Activated CD4-positive, alpha-beta T cell treated with anti-CD3 and anti-CD28 coated beads, Interleukin-2, amount 10 ng/mL, durations not matched to agents 24 days and 14 days (primary cell): ENCODE measurements at regions of chr2 and their contacts with region 1.

Region 1: DNA sequence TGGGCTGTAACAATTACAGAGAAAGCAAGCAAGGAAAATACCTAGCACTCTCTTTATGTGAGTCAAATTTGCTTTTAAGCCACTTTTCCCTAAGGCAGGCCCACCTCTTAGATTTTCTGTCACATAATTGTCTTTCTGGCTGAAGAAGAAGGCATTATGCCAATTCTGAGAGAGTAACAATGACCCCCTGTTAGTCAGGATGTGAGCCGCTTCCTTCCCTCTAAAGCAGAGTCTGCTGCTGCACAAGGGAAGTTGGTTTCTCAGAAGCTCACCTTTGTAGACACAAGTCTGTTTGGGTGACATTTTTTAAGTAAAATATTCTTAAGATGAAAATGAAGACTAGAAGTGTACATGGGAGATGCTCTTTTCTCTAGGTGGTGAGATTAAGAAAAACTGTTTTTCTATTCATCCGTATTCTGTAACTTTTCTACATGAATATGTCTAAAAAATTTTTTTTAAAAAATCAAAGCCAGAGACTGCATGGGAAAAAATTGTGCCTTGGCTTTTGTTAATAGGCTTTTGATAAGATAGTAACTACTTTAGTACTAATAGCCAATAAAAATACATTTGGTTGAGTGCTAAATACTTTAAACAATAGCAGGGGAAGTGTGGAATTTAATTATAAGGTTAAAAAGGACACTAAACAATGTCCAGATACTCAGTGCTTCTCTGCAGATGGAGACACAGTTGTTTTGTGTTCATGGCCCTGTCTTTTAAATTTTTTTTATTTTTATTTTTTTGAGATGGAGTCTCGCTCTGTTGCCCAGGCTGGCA is 33.4 kb upstream of the VPS54 start:
- DNase-seq: peak; percentile 70
- H3K4me3 Mint-ChIP-seq: no peak overlapping the region
- H3K27ac Mint-ChIP-seq: no peak overlapping the region
- H3K4me1 Mint-ChIP-seq: peaks cover 36% of the 10 kb centered on the region
- H3K27me3 Mint-ChIP-seq: no peaks in the 10 kb centered on the region

Region 2: DNA sequence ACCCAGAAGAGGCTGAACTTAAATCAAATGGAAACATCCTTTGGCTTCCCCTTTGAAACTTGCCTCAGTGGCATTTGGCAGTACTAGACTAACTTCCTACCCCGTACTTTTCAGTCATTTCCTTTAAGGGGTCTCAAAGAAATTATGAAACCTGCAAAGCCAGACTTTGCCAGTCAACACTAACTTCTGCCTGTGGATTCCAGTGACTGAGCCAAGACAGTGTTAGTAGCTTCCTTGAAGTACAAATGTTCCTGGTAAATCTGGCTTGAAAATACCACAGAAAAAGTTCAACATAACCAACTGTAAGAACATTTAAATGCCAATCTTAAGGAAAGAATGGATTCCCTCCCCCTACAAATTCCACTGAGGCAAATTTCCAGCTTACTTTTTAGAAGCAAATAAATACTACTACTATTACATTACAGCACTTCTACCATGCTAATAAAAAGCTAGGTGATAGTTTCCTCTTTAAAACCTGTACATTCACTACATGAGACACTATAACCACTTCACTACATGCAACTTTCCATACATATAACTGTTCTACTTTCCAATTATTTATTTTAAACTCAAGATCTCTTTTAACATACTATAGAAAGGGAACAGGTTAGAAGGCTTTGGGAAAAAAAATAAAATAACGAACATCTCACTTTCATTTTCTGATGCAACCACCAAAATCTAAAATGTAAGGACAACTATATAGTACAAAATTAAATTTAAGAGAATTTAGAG is 89.2 kb after region 1 on chr2:
- intact Hi-C with region 1: no loop called
- DNase-seq: peak; percentile 67
- H3K4me3 Mint-ChIP-seq: peak overlapping the region; percentile 99
- H3K27ac Mint-ChIP-seq: peak overlapping the region; percentile 85
- H3K4me1 Mint-ChIP-seq: peaks cover 39% of the 10 kb centered on the region
- H3K27me3 Mint-ChIP-seq: no peaks in the 10 kb centered on the region

Region 3: GRCh38 chr2:64488050-64488974 is 435.7 kb after region 1 on chr2:
- intact Hi-C with region 1: loop called (anchors 1 kb)
- DNase-seq: peak; percentile 93
- H3K4me3 Mint-ChIP-seq: no peak overlapping the region
- H3K27ac Mint-ChIP-seq: no peak overlapping the region
- H3K4me1 Mint-ChIP-seq: peaks cover 13% of the 10 kb centered on the region
- H3K27me3 Mint-ChIP-seq: peaks cover 24% of the 10 kb centered on the region